Mucosa of descending colon (tissue), 3 donors: ENCODE measurements at regions of chr17 and their contacts with region 1.

Region 1: DNA sequence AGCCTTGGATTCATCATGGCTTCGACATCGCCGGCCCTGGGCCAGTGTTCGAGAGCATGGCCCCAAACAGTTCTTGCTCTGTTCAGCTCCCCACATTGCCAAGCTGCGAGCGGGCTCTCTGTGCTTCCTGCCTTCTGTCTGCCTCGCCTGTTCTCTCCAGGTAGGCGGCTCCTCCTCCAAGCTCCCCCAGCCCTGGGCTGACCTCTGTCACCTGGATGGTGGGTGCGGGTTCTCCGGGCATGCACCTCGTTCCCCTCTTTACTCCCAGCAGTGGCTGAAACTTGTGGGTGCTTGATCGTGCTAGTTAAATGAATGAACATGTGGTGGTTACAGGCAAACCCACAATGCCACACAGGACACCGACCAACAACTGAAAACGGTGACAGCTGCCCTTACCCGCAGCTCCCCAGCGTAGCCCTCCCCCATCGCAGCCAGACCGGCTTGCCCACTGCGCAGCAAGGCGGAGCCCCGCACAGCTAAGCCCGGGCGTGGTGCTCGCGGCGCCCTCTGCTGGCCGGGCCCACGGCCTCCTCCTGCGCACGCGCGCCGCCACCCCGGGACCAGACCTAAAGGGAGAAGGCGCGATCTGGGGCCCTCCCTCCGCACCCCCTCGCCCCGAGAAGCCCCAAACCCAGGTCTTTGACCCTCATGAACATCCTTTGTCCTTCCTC is 23.0 kb upstream of the EIF1 start:
- DNase-seq: peak; percentile 93 to 96 (median 94)
- ATAC-seq: peak; percentile 91
- H3K4me3 ChIP-seq: no peak overlapping the region
- H3K4me1 ChIP-seq: peaks cover 22% of the 10 kb centered on the region
- CTCF ChIP-seq: peak; percentile 95

Region 2: DNA sequence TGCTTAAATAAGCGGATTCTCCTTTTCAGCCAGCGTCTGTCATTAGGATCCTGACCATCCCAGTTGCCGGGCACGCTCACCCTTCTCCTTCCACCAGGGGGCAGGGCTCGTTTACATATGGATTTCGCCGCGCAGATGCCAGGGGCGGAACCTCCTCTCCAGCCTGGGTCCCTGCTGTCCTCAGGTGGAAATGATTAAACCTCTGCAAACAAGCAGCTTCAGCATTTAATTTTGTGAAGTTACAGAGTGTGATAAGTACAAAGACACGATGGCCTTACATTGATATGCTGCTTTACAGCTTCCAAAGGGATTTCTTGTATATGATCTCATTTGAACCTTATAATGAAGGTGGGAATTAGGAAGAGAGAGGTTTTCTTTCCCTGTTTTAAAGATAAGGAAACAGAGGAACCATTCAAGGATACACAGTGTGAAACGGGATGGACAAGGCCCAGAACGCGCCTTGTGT is 862.1 kb before region 1 on chr17:
- intact Hi-C with region 1: loop called in 1 of 2 experiments (anchors 5 kb)
- DNase-seq: peak; percentile 78 to 92 (median 86)
- ATAC-seq: peak; percentile 100
- H3K4me3 ChIP-seq: no peak overlapping the region
- H3K4me1 ChIP-seq: no peaks in the 10 kb centered on the region
- CTCF ChIP-seq: peak; percentile 65

Region 3: GRCh38 chr17:40909351-40909750 is 756.4 kb before region 1 on chr17:
- intact Hi-C with region 1: loop called in 1 of 2 experiments (anchors 5 kb)
- DNase-seq: peak; percentile 68 to 83 (median 78)
- ATAC-seq: peak; percentile 92
- H3K4me3 ChIP-seq: no peak overlapping the region
- H3K4me1 ChIP-seq: peaks cover 7% of the 10 kb centered on the region
- CTCF ChIP-seq: peak; percentile 41

Region 4: GRCh38 chr17:41648411-41649195 is 17.1 kb before region 1 on chr17:
- intact Hi-C with region 1: loop called in 1 of 2 experiments (anchors 1 kb)
- DNase-seq: peak; percentile 89 to 94 (median 92)
- ATAC-seq: peak; percentile 76
- H3K4me3 ChIP-seq: no peak overlapping the region
- H3K4me1 ChIP-seq: peaks cover 46% of the 10 kb centered on the region
- CTCF ChIP-seq: peak; percentile 80

Region 5: DNA sequence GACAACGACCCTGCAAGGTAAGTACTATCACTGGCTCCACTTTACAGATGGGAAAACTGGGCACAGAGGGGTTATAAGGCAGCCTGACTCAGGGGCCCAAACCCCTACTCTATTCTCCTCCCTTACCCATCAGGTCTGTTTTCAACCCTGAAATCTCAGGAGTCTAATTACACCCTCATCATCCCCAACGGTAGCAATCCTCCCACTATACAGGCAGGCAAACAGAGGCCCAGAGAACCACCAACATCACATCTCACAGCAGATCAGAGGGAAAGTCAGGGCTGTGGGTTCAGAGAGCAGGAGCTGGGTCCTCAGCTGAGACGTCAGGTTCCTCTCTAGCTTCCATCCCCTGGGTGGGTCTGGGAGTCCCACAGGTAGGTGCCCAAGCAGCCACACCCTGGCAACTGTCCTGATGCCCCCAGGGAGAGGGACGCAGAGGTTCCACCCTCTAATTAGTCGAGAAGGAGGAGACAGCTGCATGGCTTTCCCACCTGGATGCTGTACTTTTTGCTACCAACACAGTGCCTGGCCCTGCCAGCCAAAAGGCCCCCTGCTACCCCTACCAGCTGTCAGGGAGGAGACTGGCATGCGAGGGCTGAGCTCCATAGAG is 104.4 kb after region 1 on chr17:
- intact Hi-C with region 1: no loop called
- DNase-seq: no peak
- ATAC-seq: no peak
- H3K4me3 ChIP-seq: no peak overlapping the region
- H3K4me1 ChIP-seq: peaks cover 37% of the 10 kb centered on the region
- CTCF ChIP-seq: no peak